ENCODE measurements at regions of chr12 and their contacts with region 1.

Region 1: DNA sequence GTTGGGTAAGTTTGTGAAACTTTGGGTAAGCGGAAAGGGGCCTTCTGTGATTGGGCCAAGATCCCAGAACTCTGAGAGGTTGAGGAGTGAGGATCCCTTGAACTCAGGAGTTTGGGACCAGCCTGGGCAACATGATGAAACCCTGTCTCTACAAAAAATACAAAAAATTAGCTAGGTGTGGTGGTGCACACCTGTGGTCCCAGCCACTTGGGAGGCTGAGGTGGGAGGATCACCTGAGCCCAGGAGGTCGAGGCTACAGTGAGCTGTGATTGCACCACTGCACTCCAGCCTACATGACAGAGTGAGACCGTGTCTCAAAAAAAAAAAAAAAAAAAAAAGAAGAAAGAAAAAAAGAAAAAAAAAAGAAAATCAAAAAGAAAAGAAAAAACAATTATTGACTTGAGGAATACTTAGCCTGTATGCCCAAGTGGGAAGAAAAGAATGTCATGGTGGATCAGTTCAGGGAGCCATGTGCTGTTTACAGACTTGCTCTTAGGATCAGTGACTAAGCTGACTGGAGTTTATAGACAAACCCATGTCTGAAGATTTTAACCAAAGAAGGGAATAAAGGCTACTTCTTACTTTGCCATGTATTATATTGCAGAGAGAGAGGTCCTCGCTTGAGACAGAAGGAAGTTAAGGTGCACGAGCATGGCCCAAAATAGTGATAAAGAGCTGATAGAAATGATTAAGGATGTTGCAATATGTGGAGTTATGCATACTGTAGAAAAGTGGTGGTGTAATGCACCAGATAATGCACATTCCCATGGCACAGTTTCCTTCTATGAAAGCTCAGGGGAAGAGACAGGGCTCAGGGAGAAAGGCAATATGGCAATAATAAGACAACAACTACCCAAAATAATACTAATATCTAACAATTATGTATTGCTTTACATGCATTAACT is 881 bp downstream of the HSD17B6 start:
- DNase-seq: no peak
- ATAC-seq: peak in 1 of 2 donors; percentile 27

Region 2: GRCh38 chr12:56987551-56988053 is 223.6 kb after region 1 on chr12:
- intact Hi-C with region 1: loop called (anchors 2 to 5 kb)
- DNase-seq: peak; percentile 82
- ATAC-seq: peak; percentile 86

Region 3: DNA sequence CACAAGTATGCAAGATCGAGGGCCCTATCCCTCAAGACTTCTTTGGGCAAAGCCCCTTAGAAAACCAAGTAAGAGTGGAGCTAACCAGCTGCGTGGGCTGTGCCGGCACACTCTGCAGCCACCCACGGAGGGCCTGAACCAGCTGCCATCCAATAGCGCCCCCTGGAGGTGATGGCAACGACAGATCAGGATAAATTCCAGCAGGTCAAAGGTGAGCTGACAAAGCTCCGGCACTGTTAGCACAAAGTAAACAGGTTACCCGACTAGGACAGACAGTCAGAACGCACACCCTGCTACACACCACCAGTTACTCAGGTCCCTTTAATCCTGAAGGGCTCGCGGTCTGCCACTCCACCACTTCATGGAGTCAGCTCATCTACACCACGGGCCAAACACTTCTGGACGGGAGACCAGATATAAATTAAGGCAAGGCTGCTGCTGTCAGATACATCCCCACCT is 237.5 kb after region 1 on chr12:
- intact Hi-C with region 1: loop called in 1 of 2 experiments (anchors 5 kb)
- DNase-seq: peak; percentile 78
- ATAC-seq: peak; percentile 43 to 57

Region 4: DNA sequence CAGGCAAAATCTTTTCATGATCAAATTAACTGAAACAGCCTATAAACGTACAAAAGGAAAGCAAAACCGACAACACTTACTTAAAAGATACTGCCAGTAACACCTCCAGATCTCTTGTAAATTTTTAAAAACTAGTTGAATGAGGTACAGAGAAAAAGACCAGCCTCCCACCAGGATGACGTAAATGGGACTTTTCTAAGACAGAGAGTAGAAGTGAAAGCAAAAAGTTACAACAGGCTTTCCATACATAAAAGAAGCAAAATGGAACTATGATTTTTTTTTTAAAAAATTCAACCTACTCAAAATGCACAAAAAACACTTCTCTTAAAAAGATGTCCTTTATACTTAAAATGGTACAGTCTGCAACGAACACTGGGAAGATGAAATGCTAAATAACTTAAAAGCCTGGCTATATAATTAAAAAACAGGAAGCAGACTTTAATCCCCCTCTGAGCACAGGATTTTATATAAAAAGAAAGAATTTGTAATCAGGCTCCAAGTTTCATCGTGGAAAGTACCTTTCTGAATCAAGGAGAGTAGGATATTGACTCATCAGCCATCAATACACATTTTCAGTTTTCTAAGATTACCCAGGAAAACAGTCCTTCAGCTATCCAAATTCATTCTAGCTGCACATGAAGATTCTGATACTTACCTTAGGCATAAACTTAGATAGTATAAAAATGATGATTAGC is 300.1 kb after region 1 on chr12:
- intact Hi-C with region 1: loop called in 1 of 2 experiments (anchors 5 kb)
- DNase-seq: no peak
- ATAC-seq: no peak

Measured in left cardiac atrium (tissue), 4 donors.